Dorsolateral prefrontal cortex (tissue), 120 donors: ENCODE measurements at regions of chr3 and their contacts with region 1.

Region 1: GRCh38 chr3:114454551-114455251 is 160.9 kb downstream of the TIGIT start:
- DNase-seq: peak in 4 of 10 donors; percentile 29 to 49 (median 42)
- H3K4me3 ChIP-seq: peak overlapping the region; percentile 31 to 76 (median 59)
- H3K27ac ChIP-seq: peak overlapping the region; percentile 36 to 99 (median 96)
- H3K27me3 ChIP-seq: no peaks in the 10 kb centered on the region
- CTCF ChIP-seq: peak in 1 of 56 donors; percentile 9

Region 2: GRCh38 chr3:113745273-113746068 is 709.2 kb before region 1 on chr3:
- intact Hi-C with region 1: no loop called
- DNase-seq: peak in 8 of 10 donors; percentile 39 to 66 (median 46)
- H3K4me3 ChIP-seq: peak overlapping the region; percentile 67 to 99 (median 91)
- H3K27ac ChIP-seq: peak overlapping the region; percentile 92 to 100 (median 100)
- H3K27me3 ChIP-seq: no peaks in the 10 kb centered on the region
- CTCF ChIP-seq: peak in 52 of 56 donors; percentile 37 to 79 (median 60)

Region 3: GRCh38 chr3:114442246-114442645 is 12.5 kb before region 1 on chr3:
- intact Hi-C with region 1: no loop called
- DNase-seq: no peak
- H3K4me3 ChIP-seq: peak overlapping the region in 22 of 59 donors; percentile 2 to 57 (median 41)
- H3K27ac ChIP-seq: peak overlapping the region in 32 of 59 donors; percentile 2 to 67 (median 25)
- H3K27me3 ChIP-seq: no peaks in the 10 kb centered on the region
- CTCF ChIP-seq: no peak

Region 4: GRCh38 chr3:115147329-115148141 is 692.8 kb after region 1 on chr3:
- intact Hi-C with region 1: loop called in 1 of 2 experiments (anchors 5 kb)
- DNase-seq: peak; percentile 92 to 100 (median 99)
- H3K4me3 ChIP-seq: peak overlapping the region; percentile 62 to 97 (median 89)
- H3K27ac ChIP-seq: peak overlapping the region; percentile 74 to 99 (median 98)
- H3K27me3 ChIP-seq: no peaks in the 10 kb centered on the region
- CTCF ChIP-seq: peak in 30 of 56 donors; percentile 7 to 40 (median 24)